ENCODE measurements at regions of chr21 and their contacts with region 1.

Region 1: GRCh38 chr21:31354604-31355443 is 10.8 kb upstream of the TIAM1 start:
- DNase-seq: peak; percentile 70
- H3K4me3 Mint-ChIP-seq: peak overlapping the region; percentile 55
- H3K27ac Mint-ChIP-seq: peak overlapping the region; percentile 91
- H3K4me1 Mint-ChIP-seq: peaks cover 20% of the 10 kb centered on the region
- H3K27me3 Mint-ChIP-seq: no peaks in the 10 kb centered on the region
- CTCF ChIP-seq: no peak

Region 2: GRCh38 chr21:31426235-31426797 is 71.5 kb after region 1 on chr21:
- CTCF ChIA-PET with region 1: no interaction called
- intact Hi-C with region 1: no loop called
- DNase-seq: no peak
- H3K4me3 Mint-ChIP-seq: no peak overlapping the region
- H3K27ac Mint-ChIP-seq: no peak overlapping the region
- H3K4me1 Mint-ChIP-seq: no peaks in the 10 kb centered on the region
- H3K27me3 Mint-ChIP-seq: no peaks in the 10 kb centered on the region
- CTCF ChIP-seq: no peak

Region 3: DNA sequence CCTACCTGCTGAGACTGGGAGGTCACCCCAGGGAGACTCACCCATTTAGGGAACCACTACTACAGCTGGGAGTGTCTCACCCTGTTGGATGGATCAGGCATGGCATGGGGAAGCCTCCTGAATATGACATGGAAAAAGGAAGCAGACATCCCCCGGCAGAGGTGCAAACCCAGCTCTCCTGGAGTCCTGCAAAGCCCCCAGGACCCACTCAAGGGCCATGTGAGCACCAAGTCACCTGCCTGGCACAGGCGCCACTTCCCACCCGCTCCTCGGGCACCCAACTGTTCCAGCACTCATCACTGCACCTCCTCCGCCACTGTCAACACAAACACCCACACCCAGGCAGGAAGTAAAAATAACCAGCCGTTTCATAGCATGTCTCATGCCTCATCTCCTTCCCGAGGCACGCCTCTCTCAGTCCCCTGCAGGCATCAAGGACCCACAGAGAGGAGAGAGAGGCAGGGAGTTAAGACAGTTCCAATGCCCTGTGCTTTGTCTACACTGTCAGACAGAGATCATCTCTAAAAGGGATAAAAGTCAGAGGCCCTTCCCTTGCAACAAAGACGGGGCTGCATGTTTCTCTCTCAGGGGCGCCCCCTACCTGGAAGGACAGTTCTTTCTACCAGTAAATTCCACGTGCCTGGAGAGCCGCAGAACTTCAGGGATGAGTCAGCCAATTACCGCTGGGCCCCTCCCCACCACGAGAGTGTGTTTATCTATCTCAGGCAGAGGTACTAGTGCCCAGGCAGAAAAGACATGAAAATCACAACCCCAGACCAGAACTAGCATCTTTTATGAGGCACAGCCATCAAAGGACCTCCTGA is 154.6 kb after region 1 on chr21:
- CTCF ChIA-PET with region 1: no interaction called
- intact Hi-C with region 1: loop called (anchors 10 kb)
- DNase-seq: peak; percentile 66
- H3K4me3 Mint-ChIP-seq: no peak overlapping the region
- H3K27ac Mint-ChIP-seq: no peak overlapping the region
- H3K4me1 Mint-ChIP-seq: peaks cover 14% of the 10 kb centered on the region
- H3K27me3 Mint-ChIP-seq: no peaks in the 10 kb centered on the region
- CTCF ChIP-seq: peak; percentile 37

Region 4: GRCh38 chr21:31558962-31559367 is 204.1 kb after region 1 on chr21:
- CTCF ChIA-PET with region 1: interaction called, 5 read pairs
- intact Hi-C with region 1: loop called (anchors 5 kb)
- DNase-seq: peak; percentile 91
- H3K4me3 Mint-ChIP-seq: peak overlapping the region; percentile 81
- H3K27ac Mint-ChIP-seq: peak overlapping the region; percentile 91
- H3K4me1 Mint-ChIP-seq: peaks cover 37% of the 10 kb centered on the region
- H3K27me3 Mint-ChIP-seq: no peaks in the 10 kb centered on the region
- CTCF ChIP-seq: no peak